ENCODE measurements at regions of chr10 and their contacts with region 1.

Region 1: GRCh38 chr10:74234569-74234968 is 83.5 kb downstream of the ADK start:
- DNase-seq: no peak
- H3K4me3 ChIP-seq: no peak overlapping the region
- H3K27ac ChIP-seq: no peak overlapping the region
- H3K4me1 ChIP-seq: peaks cover 0 to 11% (median 0%) of the 10 kb centered on the region in 4 donors
- H3K27me3 ChIP-seq: no peaks in the 10 kb centered on the region
- CTCF ChIP-seq: peak in 2 of 3 experiments; percentile 47 to 50
- EP300 ChIP-seq: no peak
- POLR2A ChIP-seq: no peak

Region 2: DNA sequence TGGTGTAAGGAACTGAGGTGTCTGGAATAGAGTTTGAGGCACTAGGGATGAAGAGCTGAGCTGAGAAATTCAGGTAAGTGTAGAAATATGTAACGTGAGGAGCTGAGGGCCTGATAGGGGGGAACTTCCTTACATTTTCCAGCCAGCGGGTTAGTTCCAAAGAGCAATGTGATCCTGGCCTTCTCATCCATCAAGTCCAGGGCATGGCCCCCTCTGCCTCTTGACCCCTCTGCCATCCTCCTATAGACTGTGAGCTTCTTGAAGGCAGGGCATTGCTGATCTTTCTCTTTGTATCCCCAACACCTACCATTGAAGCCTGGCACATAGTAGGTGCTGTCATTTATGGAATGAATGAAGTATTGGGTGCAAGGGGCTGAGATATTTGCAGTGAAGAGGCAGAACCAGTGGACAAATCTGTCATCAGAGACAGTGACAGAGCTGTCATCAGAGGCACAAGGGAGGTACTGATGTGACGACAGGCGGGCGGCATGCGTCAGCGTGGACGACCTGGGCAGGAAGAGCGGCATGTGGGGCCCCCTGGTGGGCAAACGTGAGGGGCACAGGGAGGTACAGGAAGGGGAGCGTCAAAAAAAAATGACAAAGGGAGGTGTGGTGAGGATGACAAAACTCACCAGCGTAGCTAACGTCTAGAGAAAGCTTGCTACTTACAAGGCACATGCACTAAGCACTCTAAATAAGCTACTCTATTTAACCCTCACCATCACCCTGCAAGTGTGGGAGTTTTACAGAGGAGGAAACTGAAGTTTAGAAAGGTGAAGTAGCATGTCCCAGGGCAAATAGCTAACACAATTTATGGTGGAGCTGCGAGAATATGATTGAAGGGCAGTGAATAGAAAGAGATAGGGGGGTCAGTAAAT is 355.0 kb before region 1 on chr10:
- intact Hi-C with region 1: loop called (anchors 10 kb)
- DNase-seq: peak; percentile 96
- H3K4me3 ChIP-seq: no peak overlapping the region
- H3K27ac ChIP-seq: peak overlapping the region; percentile 55 to 93 (median 63)
- H3K4me1 ChIP-seq: peaks cover 0 to 30% (median 29%) of the 10 kb centered on the region in 4 donors
- H3K27me3 ChIP-seq: no peaks in the 10 kb centered on the region
- CTCF ChIP-seq: peak; percentile 94 to 99 (median 97)
- EP300 ChIP-seq: no peak
- POLR2A ChIP-seq: no peak